ENCODE measurements at regions of chr18 and their contacts with region 1.

Region 1: GRCh38 chr18:33264566-33264965 is 176.0 kb downstream of the CCDC178 start:
- DNase-seq: no peak

Region 2: DNA sequence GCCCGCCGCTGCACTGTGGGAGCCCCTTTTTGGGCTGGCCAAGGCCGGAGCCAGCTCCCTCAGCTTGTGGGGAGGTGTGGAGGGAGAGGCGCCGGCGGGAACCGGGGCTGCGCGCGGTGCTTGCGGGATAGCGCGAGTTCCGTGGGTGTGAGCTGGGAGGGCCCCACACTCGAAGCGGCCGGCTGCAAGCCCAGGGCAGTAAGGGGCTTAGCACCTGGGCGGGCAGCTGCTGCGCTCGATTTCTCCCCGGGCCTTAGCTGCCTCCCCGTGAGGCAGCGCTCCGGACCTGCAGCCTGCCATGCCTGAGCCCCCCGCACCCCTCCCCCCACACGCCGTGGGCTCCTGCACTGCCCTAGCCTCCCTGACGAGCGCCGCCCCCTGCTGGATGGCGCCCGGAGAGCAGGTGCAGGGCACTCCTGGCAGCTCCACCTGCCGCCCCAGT is 51.6 kb after region 1 on chr18:
- intact Hi-C with region 1: loop called (anchors 10 kb)
- DNase-seq: peak in 3 of 10 donors; percentile 64 to 84 (median 66)